Activated naive CD8-positive, alpha-beta T cell treated with anti-CD3 and anti-CD28 coated beads, Interleukin-2, amount 10 ng/mL, durations not matched to agents 7 days and 5 days (primary cell): ENCODE measurements at regions of chrX and their contacts with region 1.

Region 1: GRCh38 chrX:48937054-48937907 is 18.5 kb upstream of the PIM2 start:
- DNase-seq: peak; percentile 83
- ATAC-seq: peak; percentile 83
- H3K4me3 Mint-ChIP-seq: peak overlapping the region; percentile 78
- H3K27ac Mint-ChIP-seq: peak overlapping the region; percentile 96
- H3K4me1 Mint-ChIP-seq: peaks cover 57% of the 10 kb centered on the region
- H3K27me3 Mint-ChIP-seq: no peaks in the 10 kb centered on the region

Region 2: DNA sequence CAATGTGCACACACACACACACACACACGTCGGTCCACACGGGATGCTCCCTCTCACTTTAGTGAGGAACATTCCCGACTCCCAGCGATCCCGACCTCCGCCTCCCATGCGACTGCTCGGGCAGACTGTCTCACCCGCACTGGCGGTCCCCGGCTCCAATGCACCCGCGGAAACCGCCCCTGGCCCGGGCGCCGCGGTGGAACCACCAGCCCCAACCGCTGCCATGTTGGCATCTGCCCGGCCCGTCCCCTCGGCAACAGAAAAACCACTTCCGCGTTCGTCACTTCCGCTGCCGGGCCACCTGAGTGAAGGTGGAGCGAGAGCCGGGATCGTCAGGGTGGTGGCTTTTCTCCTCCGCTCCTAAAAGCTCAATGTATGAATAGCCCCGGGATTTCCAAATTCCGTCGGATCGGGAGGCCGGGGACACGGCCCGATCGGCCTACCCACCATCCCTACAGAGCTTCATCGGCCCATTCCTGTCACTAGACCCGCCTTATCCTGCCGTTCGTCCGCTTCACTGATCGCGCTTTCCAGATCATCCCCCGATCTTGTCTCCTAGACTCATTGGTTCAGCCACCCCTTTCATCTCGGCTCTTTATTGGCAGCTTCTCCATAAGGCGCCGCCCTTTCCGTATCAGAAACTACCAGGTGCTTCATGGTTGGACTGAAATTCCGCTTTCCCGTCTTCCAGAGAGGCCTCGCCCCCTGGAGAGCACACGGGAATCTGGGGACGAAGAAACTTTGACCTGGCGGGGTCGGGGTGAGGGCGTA is 25.7 kb before region 1 on chrX and contains the start of gene SLC35A2:
- POLR2A ChIA-PET with region 1: interaction called, 15 read pairs
- DNase-seq: peak; percentile 87
- ATAC-seq: peak; percentile 85
- H3K4me3 Mint-ChIP-seq: peak within 1 kb of the TSS; percentile 93
- H3K27ac Mint-ChIP-seq: peak within 1 kb of the TSS; percentile 93
- H3K4me1 Mint-ChIP-seq: peaks cover 26% of the 10 kb centered on the region
- H3K27me3 Mint-ChIP-seq: no peaks in the 10 kb centered on the region
- total RNA-seq, gene SLC35A2: 12.7 to 14.1 TPM

Region 3: GRCh38 chrX:48917139-48918001 is 19.9 kb before region 1 on chrX:
- POLR2A ChIA-PET with region 1: interaction called, 51 read pairs
- DNase-seq: peak; percentile 86
- ATAC-seq: peak; percentile 57
- H3K4me3 Mint-ChIP-seq: peak overlapping the region; percentile 97
- H3K27ac Mint-ChIP-seq: peak overlapping the region; percentile 87
- H3K4me1 Mint-ChIP-seq: peaks cover 29% of the 10 kb centered on the region
- H3K27me3 Mint-ChIP-seq: no peaks in the 10 kb centered on the region